ENCODE measurements at regions of chr3 and their contacts with region 1.

Region 1: GRCh38 chr3:138774529-138775253 is 60.0 kb downstream of the PIK3CB start:
- DNase-seq: peak; percentile 98
- H3K4me3 Mint-ChIP-seq: no peak overlapping the region
- H3K27ac Mint-ChIP-seq: peak overlapping the region; percentile 96
- H3K4me1 Mint-ChIP-seq: peaks cover 18% of the 10 kb centered on the region
- H3K27me3 Mint-ChIP-seq: no peaks in the 10 kb centered on the region
- CTCF ChIP-seq: no peak

Region 2: GRCh38 chr3:138479438-138479863 is 295.2 kb before region 1 on chr3:
- CTCF ChIA-PET with region 1: no interaction called
- POLR2A ChIA-PET with region 1: no interaction called
- intact Hi-C with region 1: no loop called
- DNase-seq: peak; percentile 62
- H3K4me3 Mint-ChIP-seq: no peak overlapping the region
- H3K27ac Mint-ChIP-seq: peak overlapping the region; percentile 57
- H3K4me1 Mint-ChIP-seq: peaks cover 6% of the 10 kb centered on the region
- H3K27me3 Mint-ChIP-seq: no peaks in the 10 kb centered on the region
- CTCF ChIP-seq: peak; percentile 88

Region 3: GRCh38 chr3:138862924-138863775 is 88.5 kb after region 1 on chr3:
- CTCF ChIA-PET with region 1: interaction called, 9 read pairs
- POLR2A ChIA-PET with region 1: interaction called, 11 read pairs
- intact Hi-C with region 1: no loop called
- DNase-seq: peak; percentile 94
- H3K4me3 Mint-ChIP-seq: peak overlapping the region; percentile 46
- H3K27ac Mint-ChIP-seq: peak overlapping the region; percentile 89
- H3K4me1 Mint-ChIP-seq: peaks cover 20% of the 10 kb centered on the region
- H3K27me3 Mint-ChIP-seq: no peaks in the 10 kb centered on the region
- CTCF ChIP-seq: no peak